ENCODE measurements at regions of chr11 and their contacts with region 1.

Region 1: GRCh38 chr11:1876361-1877063 is 15.2 kb downstream of the PRR33 start:
- DNase-seq: peak; percentile 43 to 59 (median 54)
- ATAC-seq: no peak
- H3K4me3 ChIP-seq: no peak overlapping the region
- H3K27ac ChIP-seq: peak overlapping the region in 1 of 4 donors; percentile 0
- H3K4me1 ChIP-seq: peaks cover 18% of the 10 kb centered on the region
- H3K27me3 ChIP-seq: no peaks in the 10 kb centered on the region
- CTCF ChIP-seq: peak; percentile 20 to 53 (median 46)
- POLR2A ChIP-seq: no peak

Region 2: GRCh38 chr11:1827095-1827813 is 49.3 kb before region 1 on chr11:
- intact Hi-C with region 1: loop called (anchors 5 kb)
- DNase-seq: peak; percentile 83 to 93 (median 90)
- ATAC-seq: peak; percentile 66
- H3K4me3 ChIP-seq: no peak overlapping the region
- H3K27ac ChIP-seq: peak overlapping the region; percentile 37 to 84 (median 74)
- H3K4me1 ChIP-seq: peaks cover 74% of the 10 kb centered on the region
- H3K27me3 ChIP-seq: no peaks in the 10 kb centered on the region
- CTCF ChIP-seq: peak in 1 of 7 experiments; percentile 15
- POLR2A ChIP-seq: peak in 1 of 3 donors; percentile 43

Region 3: GRCh38 chr11:2217211-2218030 is 340.9 kb after region 1 on chr11:
- intact Hi-C with region 1: no loop called
- DNase-seq: peak in 1 of 4 donors; percentile 8
- ATAC-seq: no peak
- H3K4me3 ChIP-seq: no peak overlapping the region
- H3K27ac ChIP-seq: no peak overlapping the region
- H3K4me1 ChIP-seq: peaks cover 5% of the 10 kb centered on the region
- H3K27me3 ChIP-seq: no peaks in the 10 kb centered on the region
- CTCF ChIP-seq: no peak
- POLR2A ChIP-seq: no peak

Measured in body of pancreas (tissue), 4 donors.